PC-9 (cell line): ENCODE measurements at regions of chr11 and their contacts with region 1.

Region 1: DNA sequence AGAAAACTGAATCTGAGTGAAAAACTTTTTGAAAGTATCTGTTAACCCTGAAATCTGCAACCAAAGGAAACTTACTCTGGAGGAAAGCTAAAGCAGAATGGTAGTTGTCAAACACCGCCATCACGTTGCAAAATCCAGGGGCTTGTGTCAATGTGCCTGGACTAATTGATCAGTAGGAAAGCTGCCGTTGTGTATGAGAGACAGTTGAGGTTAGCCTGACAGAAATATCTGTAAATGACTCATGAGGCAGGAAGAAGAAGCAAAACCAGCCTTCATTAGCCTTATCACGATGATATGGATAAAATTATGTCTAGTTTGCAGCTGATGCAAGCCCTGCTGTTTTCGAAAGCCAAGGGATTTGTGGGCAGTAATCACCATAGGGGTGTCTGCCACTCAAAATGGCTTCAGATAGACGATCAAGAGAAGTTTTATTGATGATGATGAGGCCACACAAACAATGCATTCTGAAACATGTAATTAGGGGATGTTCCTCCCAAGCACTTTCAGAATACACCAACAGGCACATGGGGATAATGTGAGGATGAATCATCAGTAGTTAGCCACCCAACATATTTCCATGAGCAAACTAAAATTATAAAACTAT is 8.9 kb downstream of the SCGB1A1 start:
- DNase-seq: peak in 1 of 2 experiments; percentile 69
- H3K4me3 ChIP-seq: no peak overlapping the region
- H3K27ac ChIP-seq: peak overlapping the region; percentile 91
- H3K4me1 ChIP-seq: peaks cover 45% of the 10 kb centered on the region
- H3K27me3 ChIP-seq: no peaks in the 10 kb centered on the region
- CTCF ChIP-seq: no peak

Region 2: DNA sequence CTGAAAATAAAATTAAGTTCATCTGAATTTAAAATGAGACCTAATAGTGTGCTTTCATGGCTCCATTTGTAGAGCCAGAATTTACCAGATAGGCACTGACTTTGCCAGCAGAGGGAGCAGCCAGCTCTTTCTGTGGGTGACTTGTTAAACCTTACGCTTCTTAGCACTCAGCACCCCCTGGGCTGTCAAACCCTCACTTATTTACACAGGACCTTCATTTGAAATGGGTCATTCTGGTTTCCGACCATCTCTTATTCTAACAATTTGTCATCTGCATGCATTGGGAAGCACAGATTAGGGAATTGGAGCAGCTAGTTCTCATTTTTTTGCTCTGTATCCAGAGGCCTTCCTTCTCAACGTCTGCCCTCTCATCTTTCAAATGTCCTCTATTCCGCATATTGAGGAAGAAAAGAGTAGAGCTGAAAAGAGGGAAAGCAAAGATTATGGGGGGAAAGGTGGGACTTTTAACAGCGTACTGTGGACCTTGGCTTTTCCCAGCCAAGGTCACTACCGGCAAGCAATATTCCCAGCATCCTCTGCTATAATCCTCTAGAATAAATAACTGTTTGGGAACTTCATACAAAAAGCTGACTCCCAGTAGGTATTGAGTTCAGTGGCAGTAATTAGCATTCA is 87.3 kb before region 1 on chr11:
- CTCF ChIA-PET with region 1: no interaction called
- POLR2A ChIA-PET with region 1: no interaction called
- intact Hi-C with region 1: no loop called
- DNase-seq: peak in 1 of 2 experiments; percentile 18
- H3K4me3 ChIP-seq: no peak overlapping the region
- H3K27ac ChIP-seq: no peak overlapping the region
- H3K4me1 ChIP-seq: no peaks in the 10 kb centered on the region
- H3K27me3 ChIP-seq: peaks cover 31% of the 10 kb centered on the region
- CTCF ChIP-seq: peak; percentile 77

Region 3: DNA sequence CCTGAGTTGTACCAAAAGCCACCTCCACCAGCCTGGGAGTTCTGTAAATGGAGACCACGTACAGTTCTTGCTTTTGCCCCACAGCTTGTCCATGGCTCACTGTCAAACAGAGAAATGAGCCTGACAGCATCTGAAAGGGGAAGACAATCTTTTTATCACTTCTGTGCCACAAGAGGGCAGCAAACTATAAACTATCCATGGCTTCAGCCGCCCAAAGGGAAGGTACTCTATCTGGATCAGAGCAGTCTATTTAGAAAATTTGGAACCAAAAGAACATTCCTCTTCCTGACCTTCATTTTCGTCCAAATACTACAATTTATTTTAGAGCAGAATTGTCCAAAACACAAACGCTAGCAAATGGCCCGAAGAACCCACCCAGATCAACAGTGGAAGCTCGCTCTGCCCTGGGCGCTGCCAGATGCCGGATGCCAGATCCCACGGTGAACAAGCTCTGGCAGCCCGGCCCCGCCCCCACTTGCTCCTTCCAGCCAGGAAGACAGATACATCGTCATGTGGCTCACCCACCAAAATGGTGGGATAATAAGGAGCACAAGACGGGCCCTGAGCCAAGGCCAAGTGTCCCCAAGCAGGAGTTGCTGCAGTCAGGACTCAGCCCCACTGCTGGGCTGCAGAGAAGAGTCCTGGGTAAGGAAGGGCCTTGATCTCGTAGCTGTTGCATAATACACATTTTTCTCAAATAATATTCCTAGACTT is 32.8 kb before region 1 on chr11:
- CTCF ChIA-PET with region 1: interaction called, 16 read pairs
- POLR2A ChIA-PET with region 1: no interaction called
- intact Hi-C with region 1: loop called (anchors 2 kb)
- DNase-seq: peak; percentile 71 to 75
- H3K4me3 ChIP-seq: no peak overlapping the region
- H3K27ac ChIP-seq: no peak overlapping the region
- H3K4me1 ChIP-seq: peaks cover 27% of the 10 kb centered on the region
- H3K27me3 ChIP-seq: no peaks in the 10 kb centered on the region
- CTCF ChIP-seq: peak; percentile 91

Region 4: DNA sequence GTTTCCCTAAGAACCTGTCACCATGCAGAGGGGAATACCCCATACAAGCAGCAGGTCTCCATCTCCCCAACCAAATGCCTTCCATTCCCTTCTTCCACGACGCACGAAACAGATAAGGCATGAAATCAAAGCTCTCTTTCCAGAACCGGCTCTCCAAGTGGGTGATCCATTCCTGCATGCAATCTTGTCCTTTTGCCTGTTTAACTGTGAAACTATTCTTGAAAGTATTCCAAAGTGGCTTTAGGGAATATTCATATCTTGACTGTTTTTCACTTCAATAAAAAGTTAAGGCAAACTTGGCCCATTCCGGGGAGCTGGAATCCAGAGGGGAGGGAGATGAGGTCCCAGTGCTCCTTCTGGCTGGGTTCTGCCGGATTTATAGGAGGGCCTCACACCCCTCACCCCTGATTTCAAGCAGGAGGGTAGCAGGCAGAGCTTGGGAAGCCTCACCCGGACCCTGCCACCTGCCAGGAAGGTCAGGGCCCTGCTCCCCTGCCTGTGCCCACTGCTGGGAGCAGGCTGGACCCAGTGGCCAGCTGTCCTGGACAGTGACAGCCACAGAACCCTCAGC is 52.0 kb after region 1 on chr11:
- CTCF ChIA-PET with region 1: interaction called, 10 read pairs
- POLR2A ChIA-PET with region 1: interaction called, 8 read pairs
- intact Hi-C with region 1: loop called (anchors 2 kb)
- DNase-seq: no peak
- H3K4me3 ChIP-seq: peak overlapping the region; percentile 36; the same call in 1 of the 2 replicates
- H3K27ac ChIP-seq: peak overlapping the region; percentile 95
- H3K4me1 ChIP-seq: peaks cover 42% of the 10 kb centered on the region
- H3K27me3 ChIP-seq: no peaks in the 10 kb centered on the region
- CTCF ChIP-seq: no peak

Region 5: DNA sequence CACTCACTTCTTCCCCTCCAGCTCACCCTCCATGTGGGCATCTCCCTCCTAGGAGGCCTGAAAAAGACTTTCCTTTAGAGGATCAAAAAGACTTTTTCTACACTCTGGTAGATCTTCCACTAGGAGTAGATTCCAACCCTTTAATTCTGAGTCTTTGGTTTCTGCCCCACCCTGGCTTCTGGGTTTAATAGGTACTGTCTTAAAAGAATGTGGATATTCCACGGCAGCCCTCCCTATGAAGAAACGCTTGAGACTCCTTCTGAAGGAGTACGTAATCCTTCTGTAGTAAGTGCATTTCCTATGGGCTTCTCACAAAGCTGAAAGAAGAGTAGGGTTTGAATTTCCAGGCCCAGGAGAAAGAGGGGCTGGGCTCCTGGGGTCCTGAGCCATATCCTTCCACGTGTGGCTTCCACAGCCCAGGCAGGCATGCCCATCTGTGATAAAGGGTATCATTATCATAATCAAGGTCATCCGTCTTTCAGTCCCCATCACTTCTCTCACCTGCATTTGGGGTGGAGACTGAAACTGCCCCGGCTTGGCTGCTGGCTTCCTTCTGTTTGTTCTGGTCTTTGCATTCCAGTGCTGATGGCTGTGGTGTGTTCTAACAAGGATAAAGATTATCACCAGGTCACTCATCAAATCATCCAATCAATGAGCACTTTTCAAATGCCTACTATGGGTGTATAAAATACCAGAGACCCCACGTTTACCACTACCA is 63.7 kb after region 1 on chr11:
- CTCF ChIA-PET with region 1: no interaction called
- POLR2A ChIA-PET with region 1: no interaction called
- intact Hi-C with region 1: no loop called
- DNase-seq: no peak
- H3K4me3 ChIP-seq: no peak overlapping the region
- H3K27ac ChIP-seq: no peak overlapping the region
- H3K4me1 ChIP-seq: no peaks in the 10 kb centered on the region
- H3K27me3 ChIP-seq: no peaks in the 10 kb centered on the region
- CTCF ChIP-seq: no peak

Region 6: DNA sequence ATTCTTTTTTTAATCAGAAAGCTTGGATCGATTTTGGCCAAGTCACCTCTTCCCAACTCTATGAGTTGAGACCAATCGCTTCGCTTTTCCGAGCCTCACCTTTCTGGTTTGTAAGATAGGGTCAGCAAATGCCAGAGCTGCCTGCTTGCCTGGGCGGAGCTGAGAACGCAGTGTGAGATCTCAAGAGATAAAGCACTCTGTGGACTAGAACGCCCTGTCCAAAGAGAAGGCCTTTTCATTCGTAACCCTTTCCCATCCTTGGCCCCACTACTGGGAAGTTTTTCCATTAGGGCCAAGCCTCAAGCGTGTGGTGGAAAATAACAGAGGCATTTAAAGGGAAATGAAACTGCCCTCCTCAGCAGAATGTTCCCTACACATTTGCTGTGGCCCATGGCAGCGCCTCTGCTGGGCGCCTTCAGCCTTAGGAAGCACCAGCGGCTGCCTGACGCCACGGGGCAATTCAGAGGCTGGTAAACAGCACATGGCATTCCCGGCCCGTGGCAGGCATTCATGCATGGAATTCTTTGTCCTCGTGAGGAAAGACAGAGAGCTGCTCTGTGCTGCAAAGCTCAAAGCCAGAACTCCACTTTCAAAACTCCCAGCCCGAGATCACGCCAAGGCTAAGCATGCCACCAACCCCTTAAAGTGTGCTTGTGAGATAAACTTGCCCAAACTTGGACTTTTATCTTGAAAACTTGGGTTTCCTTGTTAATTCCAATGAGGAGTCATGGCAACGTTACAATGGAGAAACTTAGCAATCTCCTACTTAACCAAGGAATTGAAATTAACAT is 80.7 kb after region 1 on chr11:
- CTCF ChIA-PET with region 1: interaction called, 10 read pairs
- POLR2A ChIA-PET with region 1: no interaction called
- intact Hi-C with region 1: no loop called
- DNase-seq: peak; percentile 86 to 92
- H3K4me3 ChIP-seq: peak overlapping the region; percentile 19; the same call in 1 of the 2 replicates
- H3K27ac ChIP-seq: peak overlapping the region; percentile 63
- H3K4me1 ChIP-seq: peaks cover 46% of the 10 kb centered on the region
- H3K27me3 ChIP-seq: no peaks in the 10 kb centered on the region
- CTCF ChIP-seq: peak; percentile 57; the same call in 1 of the 2 replicates

Region 7: DNA sequence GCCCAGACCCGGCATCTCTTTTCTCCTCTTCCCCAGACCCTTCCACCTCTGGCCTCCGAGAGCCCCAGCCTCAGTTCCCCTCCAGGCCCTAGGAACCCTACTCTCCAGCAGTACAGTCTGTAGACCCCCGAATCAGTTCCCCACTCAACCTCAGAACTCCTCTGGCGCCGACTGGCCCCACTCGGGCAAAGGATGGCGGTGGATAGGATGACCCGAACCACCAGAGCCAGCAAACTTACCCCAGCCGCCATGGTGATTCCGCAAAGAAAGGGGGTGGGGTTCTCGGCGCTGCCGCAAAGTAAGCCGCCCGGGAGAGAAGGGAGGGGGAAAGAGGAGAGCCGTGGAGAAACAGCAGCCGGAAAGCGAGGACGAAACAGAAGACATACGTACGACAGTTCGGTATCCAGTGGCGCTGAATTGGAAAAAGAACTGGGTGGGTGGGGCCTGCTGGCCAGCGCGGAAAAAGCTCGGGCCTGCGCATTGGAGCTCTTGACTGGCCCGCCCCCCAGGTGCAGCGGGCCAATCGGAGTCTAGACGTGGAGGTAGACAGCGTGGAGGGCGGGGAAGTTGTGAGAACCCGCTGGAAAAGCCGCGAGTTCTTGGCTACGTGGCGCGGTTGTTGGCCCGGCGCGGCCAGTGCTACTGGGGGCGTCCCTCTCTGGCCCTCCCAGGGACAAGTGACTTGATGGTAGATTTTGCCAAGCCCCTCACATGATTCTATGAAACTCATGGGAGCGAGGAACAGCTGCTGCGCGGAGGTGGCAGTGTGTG is 146.0 kb after region 1 on chr11 and contains the start of gene EEF1G:
- CTCF ChIA-PET with region 1: interaction called, 3 read pairs
- POLR2A ChIA-PET with region 1: interaction called, 10 read pairs
- intact Hi-C with region 1: no loop called
- DNase-seq: peak; percentile 100
- H3K4me3 ChIP-seq: peak within 1 kb of the TSS; percentile 92
- H3K27ac ChIP-seq: peak within 1 kb of the TSS; percentile 86
- H3K4me1 ChIP-seq: peaks cover 42% of the 10 kb centered on the region
- H3K27me3 ChIP-seq: no peaks in the 10 kb centered on the region
- CTCF ChIP-seq: no peak
- total RNA-seq, gene EEF1G: 1,773 and 2,008 TPM in 2 replicates